Mammary epithelial cell (primary cell): ENCODE measurements at regions of chr10 and their contacts with region 1.

Region 1: DNA sequence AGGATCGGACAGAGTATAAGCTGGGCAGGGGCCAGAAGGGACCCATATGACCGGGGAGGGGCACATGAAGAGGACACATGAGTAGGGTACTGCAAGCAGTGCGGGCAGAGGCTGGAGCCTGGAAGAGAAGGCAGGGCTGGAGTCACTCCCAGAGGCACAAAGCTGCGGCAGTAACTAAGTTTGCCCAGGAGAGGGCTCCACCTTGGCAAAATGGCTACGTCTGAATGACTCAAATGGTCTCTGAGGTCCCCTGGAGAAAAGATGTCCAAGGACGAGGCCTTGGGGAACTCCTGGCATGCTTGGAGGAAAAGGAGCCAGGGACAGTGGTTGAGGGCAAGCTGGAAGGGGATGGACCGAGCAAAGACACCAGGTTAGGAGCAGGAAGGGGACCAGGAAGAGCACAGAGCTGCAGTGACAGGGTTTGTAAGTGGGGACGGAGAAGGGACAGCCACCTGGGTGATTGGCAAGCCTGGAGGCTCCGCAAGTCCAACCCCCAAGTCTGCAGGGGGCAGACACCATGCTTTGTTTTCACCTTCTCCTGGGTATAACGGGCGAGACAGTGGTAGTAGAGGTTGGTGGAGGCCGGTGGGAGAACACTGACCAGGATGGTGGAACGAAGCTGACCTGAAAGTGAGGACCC is 43.1 kb upstream of the LBX1 start:
- DNase-seq: peak; percentile 50
- H3K4me3 ChIP-seq: no peak overlapping the region
- H3K27ac ChIP-seq: no peak overlapping the region
- H3K4me1 ChIP-seq: peaks cover 2% of the 10 kb centered on the region
- H3K27me3 ChIP-seq: no peaks in the 10 kb centered on the region
- CTCF ChIP-seq: peak; percentile 76 to 89

Region 2: DNA sequence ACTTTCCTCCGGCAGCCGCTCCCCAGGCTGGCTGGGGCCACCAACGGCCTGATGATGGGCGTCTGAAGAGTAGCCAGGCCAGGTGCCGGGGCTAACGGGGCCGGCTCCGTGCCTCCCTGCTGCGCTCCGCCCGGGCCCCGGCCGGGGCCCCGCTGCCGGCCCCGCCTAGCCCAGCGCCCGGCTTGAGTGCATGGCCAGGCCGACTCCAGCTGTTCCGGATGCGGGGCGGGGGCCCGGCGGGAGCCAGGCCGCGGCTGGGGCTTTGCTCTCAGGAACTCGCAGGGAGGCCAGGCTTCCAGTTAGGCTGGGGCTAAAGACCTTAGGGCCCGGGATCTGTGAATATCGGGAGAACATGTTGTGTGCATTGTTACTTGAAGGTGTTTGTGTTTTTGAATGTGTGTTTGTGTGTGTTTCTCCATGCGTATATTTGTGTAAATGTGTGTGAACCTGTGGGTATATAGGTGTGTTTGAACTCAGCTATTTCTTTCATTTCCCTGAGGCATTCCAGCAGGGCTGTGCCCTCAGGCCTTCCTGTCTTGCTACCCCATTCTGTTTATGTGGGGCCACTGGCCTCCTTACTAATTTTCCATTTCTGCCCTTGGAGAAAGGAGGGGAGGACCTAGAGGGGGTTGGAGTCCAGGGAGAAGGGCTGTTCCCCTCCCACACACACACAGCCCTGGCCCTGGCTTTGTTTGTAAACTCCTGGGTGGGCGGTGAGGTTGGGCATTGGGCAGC is 42.0 kb before region 1 on chr10:
- CTCF ChIA-PET with region 1: no interaction called
- dilution Hi-C with region 1: loop called (anchors 5 kb)
- in situ Hi-C with region 1: no loop called
- intact Hi-C with region 1: no loop called
- DNase-seq: no peak
- H3K4me3 ChIP-seq: no peak overlapping the region
- H3K27ac ChIP-seq: no peak overlapping the region
- H3K4me1 ChIP-seq: peaks cover 22% of the 10 kb centered on the region
- H3K27me3 ChIP-seq: peaks cover 67% of the 10 kb centered on the region
- CTCF ChIP-seq: no peak